ENCODE measurements at regions of chr9 and their contacts with region 1.

Region 1: DNA sequence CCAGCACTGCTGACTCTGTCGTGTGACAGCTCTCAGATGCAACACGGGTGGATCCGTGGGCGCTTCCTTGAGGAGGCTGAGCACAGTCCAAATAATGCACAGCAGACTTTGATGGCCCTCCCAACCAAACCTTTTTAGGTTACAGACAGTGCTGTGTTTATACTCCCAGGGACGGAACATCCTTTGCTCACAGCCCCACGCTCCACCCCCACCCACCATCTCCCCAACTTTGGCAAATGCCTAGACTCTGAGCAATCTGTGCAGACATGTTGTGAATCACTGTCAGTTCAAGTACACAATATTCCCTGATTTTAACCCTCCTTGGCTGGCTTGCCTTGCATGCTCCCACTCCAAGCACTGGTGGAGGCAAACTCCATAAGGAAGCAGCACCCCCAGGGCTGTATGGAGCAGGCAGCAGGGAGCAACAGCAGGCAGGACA is 324.6 kb downstream of the MLLT3 start:
- DNase-seq: no peak
- ATAC-seq: no peak
- H3K4me3 ChIP-seq: no peak overlapping the region
- H3K4me3 Mint-ChIP-seq: no peak overlapping the region
- H3K27ac ChIP-seq: no peak overlapping the region
- H3K27ac Mint-ChIP-seq: no peak overlapping the region
- H3K4me1 ChIP-seq: peaks cover 8% of the 10 kb centered on the region
- H3K4me1 Mint-ChIP-seq: peaks cover 38% of the 10 kb centered on the region
- H3K27me3 ChIP-seq: no peaks in the 10 kb centered on the region
- H3K27me3 Mint-ChIP-seq: no peaks in the 10 kb centered on the region
- CTCF ChIP-seq: no peak

Region 2: DNA sequence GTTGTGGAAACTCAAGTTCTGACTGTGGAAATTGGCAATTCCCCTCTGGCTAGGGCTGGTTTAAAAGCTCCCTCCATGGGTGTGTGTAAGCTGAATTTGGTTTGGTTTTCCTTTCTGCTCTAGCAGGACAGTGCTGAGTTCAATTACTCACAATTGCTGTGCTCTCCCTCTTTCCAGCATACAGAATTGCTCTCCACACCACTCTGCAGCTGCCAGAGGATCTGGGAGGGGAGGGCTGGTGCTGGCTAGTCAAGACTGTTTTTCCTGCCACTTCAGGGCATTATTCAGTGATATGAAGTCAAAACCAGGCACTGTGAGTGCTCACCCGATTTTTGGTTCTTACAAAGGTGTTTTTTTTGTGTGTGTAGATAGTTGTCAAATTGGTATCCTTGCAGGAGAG is 171.9 kb before region 1 on chr9:
- CTCF ChIA-PET with region 1: no interaction called
- POLR2A ChIA-PET with region 1: no interaction called
- intact Hi-C with region 1: no loop called
- DNase-seq: no peak
- ATAC-seq: no peak
- H3K4me3 ChIP-seq: no peak overlapping the region
- H3K4me3 Mint-ChIP-seq: no peak overlapping the region
- H3K27ac ChIP-seq: no peak overlapping the region
- H3K27ac Mint-ChIP-seq: no peak overlapping the region
- H3K4me1 ChIP-seq: no peaks in the 10 kb centered on the region
- H3K4me1 Mint-ChIP-seq: no peaks in the 10 kb centered on the region
- H3K27me3 ChIP-seq: no peaks in the 10 kb centered on the region
- H3K27me3 Mint-ChIP-seq: no peaks in the 10 kb centered on the region
- CTCF ChIP-seq: no peak

Region 3: GRCh38 chr9:20242510-20243189 is 55.0 kb before region 1 on chr9:
- CTCF ChIA-PET with region 1: no interaction called
- POLR2A ChIA-PET with region 1: no interaction called
- intact Hi-C with region 1: loop called in 1 of 2 experiments (anchors 5 kb)
- DNase-seq: peak in 8 of 14 experiments; percentile 9 to 78 (median 38)
- ATAC-seq: peak; percentile 89
- H3K4me3 ChIP-seq: peak overlapping the region; percentile 39
- H3K4me3 Mint-ChIP-seq: peak overlapping the region; percentile 72
- H3K27ac ChIP-seq: peak overlapping the region; percentile 14 to 56
- H3K27ac Mint-ChIP-seq: peak overlapping the region; percentile 60
- H3K4me1 ChIP-seq: peaks cover 27% of the 10 kb centered on the region
- H3K4me1 Mint-ChIP-seq: peaks cover 66% of the 10 kb centered on the region
- H3K27me3 ChIP-seq: no peaks in the 10 kb centered on the region
- H3K27me3 Mint-ChIP-seq: no peaks in the 10 kb centered on the region
- CTCF ChIP-seq: no peak

Region 4: DNA sequence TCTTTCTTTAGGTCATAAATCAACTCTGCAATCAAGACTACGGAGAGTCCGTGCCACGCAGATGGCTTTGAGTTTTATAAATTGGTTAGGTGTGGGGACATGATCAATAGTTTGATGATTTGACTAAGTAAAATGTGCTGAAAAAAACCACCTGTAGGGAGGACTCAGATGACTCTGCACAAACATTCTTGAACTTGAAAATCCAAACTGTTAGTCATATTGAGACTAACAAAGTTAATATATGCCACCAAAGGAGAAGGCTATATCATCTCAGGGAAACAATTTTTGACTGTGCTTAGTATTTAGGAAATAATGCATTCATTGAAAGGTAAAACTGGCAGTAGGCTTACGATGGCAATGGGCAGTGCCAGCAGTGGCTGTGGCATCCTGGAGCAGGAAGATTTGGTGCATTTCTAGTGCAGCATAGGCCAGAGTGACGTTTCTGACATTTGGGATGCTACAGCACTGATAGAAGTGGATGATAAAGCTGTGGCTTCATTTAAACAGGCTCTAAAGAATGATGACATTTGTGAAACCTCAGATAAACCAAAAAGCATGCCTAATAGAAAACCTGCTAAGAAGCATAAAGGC is 33.5 kb after region 1 on chr9:
- CTCF ChIA-PET with region 1: no interaction called
- POLR2A ChIA-PET with region 1: no interaction called
- intact Hi-C with region 1: loop called in 1 of 2 experiments (anchors 5 kb)
- DNase-seq: no peak
- ATAC-seq: no peak
- H3K4me3 ChIP-seq: no peak overlapping the region
- H3K4me3 Mint-ChIP-seq: no peak overlapping the region
- H3K27ac ChIP-seq: no peak overlapping the region
- H3K27ac Mint-ChIP-seq: no peak overlapping the region
- H3K4me1 ChIP-seq: no peaks in the 10 kb centered on the region
- H3K4me1 Mint-ChIP-seq: peaks cover 13% of the 10 kb centered on the region
- H3K27me3 ChIP-seq: no peaks in the 10 kb centered on the region
- H3K27me3 Mint-ChIP-seq: no peaks in the 10 kb centered on the region
- CTCF ChIP-seq: no peak